ENCODE measurements at regions of chr20 and their contacts with region 1.

Region 1: DNA sequence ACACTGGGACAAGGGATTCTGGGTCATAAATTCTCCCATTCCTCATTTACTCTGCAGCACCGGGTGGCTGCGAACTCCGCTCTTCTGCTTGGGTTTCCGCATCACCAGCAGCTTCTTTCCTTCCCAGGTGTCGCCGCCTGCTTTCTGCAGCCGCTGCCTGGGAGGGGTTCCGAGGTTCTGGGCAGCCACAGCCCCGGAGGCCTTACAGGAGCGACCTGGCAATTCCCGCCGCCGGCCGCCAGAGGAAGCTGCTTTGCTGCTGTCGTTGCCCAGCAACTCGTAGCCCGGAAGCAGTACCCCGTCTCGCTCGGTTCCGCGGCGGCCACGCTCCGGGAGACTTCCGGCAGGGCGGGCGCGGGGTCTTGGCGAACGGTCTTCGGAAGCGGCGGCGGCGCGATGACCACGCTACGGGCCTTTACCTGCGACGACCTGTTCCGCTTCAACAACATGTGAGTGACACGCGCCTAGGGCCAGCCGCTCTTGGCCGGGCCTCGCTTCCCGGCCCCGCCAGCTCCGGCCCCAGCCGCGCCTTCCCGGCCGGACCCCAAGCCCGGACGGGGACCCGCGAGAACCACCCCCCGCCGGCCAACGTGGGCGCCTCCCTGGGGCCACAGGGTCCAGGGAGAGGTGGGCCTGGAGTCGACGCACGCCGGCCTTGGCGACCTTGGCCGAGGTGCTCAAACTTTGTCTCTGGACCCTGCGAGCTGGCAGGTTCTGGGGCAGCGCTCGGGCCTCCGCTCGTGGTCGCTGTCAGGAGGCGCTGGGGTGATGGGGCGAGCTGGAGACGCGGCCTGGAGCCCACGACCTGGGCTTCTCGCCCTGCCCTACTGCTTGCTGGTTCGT is at the start of gene NAA20:
- DNase-seq: peak; percentile 80 to 89 (median 87)
- ATAC-seq: peak; percentile 99
- H3K4me3 ChIP-seq: peak within 1 kb of the TSS; percentile 77
- H3K4me3 Mint-ChIP-seq: peak within 1 kb of the TSS; percentile 88 to 96 (median 93)
- H3K27ac ChIP-seq: peak within 1 kb of the TSS; percentile 83
- H3K27ac Mint-ChIP-seq: peak within 1 kb of the TSS; percentile 90 to 96 (median 94)
- H3K4me1 ChIP-seq: peaks cover 9 to 28% of the 10 kb centered on the region in 2 donors
- H3K4me1 Mint-ChIP-seq: peaks cover 38 to 68% (median 63%) of the 10 kb centered on the region in 7 donors
- H3K27me3 ChIP-seq: no peaks in the 10 kb centered on the region
- H3K27me3 Mint-ChIP-seq: no peaks in the 10 kb centered on the region
- total RNA-seq, gene NAA20: 21.5 to 52.6 (median 28.3) TPM

Region 2: DNA sequence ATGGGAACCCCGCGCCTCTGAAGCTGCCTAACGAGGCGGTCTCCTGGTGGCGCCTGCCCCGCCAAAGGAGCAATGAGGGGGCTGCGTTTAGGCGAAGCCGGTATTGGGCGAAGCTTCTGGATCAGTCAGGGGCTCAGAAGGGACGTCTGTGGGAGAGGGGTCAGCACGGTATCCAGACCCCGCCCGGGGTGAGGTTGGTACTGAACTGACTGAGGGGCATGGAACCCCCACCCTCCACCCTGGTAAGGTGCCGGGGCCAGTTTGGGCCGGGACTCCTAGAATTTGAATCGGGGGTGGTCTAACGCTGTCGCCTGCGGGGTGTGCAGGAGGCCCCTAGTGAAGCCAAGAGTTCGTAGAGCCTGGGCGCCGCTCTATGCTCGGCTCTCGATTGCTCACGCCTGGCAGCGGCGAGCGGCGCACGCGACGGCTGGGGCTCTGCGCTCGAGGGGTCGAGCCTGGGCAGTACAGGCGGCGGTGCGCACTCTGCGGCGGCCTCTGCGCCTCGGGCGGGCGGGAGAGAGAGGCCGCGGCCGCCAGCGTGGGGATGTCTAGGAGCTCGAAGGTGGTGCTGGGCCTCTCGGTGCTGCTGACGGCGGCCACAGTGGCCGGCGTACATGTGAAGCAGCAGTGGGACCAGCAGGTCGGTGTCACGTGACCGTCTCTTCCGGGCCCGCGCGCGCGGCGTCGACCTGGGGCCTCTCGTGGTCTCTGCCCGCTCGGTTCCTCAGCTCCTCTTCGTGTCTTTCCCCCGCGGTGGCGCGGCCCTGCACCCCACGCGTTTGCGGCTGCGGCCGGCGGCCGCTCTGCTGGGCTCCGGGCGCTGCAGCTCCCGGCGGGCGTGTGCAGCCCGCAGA is 1879.6 kb before region 1 on chr20 and contains the starts of genes KAT14 and PET117:
- CTCF ChIA-PET with region 1: no interaction called
- POLR2A ChIA-PET with region 1: no interaction called
- intact Hi-C with region 1: loop called in 1 of 2 experiments (anchors 5 kb)
- DNase-seq: peak; percentile 85 to 96 (median 93)
- ATAC-seq: peak; percentile 98
- H3K4me3 ChIP-seq: peak within 1 kb of the TSS; percentile 99
- H3K4me3 Mint-ChIP-seq: peak within 1 kb of the TSS; percentile 76 to 92 (median 88)
- H3K27ac ChIP-seq: peak within 1 kb of the TSS; percentile 89
- H3K27ac Mint-ChIP-seq: peak within 1 kb of the TSS; percentile 85 to 95 (median 92)
- H3K4me1 ChIP-seq: peaks cover 13 to 15% of the 10 kb centered on the region in 2 donors
- H3K4me1 Mint-ChIP-seq: peaks cover 23 to 44% (median 31%) of the 10 kb centered on the region in 7 donors
- H3K27me3 ChIP-seq: no peaks in the 10 kb centered on the region
- H3K27me3 Mint-ChIP-seq: peaks cover 0 to 7% (median 0%) of the 10 kb centered on the region in 5 donors
- total RNA-seq, gene KAT14: 12.3 to 26.7 (median 16.2) TPM
- total RNA-seq, gene PET117: 9.0 to 20.3 (median 11.7) TPM

Region 3: GRCh38 chr20:18587665-18588573 is 1429.3 kb before region 1 on chr20 and contains the start of gene DTD1:
- CTCF ChIA-PET with region 1: no interaction called
- POLR2A ChIA-PET with region 1: no interaction called
- intact Hi-C with region 1: loop called in 1 of 2 experiments (anchors 5 kb)
- DNase-seq: peak; percentile 29 to 93 (median 53)
- ATAC-seq: peak; percentile 92
- H3K4me3 ChIP-seq: peak within 1 kb of the TSS; percentile 68
- H3K4me3 Mint-ChIP-seq: peak within 1 kb of the TSS; percentile 83 to 99 (median 91)
- H3K27ac ChIP-seq: peak within 1 kb of the TSS; percentile 74
- H3K27ac Mint-ChIP-seq: peak within 1 kb of the TSS; percentile 80 to 94 (median 91)
- H3K4me1 ChIP-seq: peaks cover 0 to 4% of the 10 kb centered on the region in 2 donors
- H3K4me1 Mint-ChIP-seq: peaks cover 16 to 39% (median 27%) of the 10 kb centered on the region in 7 donors
- H3K27me3 ChIP-seq: no peaks in the 10 kb centered on the region
- H3K27me3 Mint-ChIP-seq: peaks cover 0 to 11% (median 9%) of the 10 kb centered on the region in 5 donors
- total RNA-seq, gene DTD1: 12.7 to 24.4 (median 16.6) TPM

Region 4: DNA sequence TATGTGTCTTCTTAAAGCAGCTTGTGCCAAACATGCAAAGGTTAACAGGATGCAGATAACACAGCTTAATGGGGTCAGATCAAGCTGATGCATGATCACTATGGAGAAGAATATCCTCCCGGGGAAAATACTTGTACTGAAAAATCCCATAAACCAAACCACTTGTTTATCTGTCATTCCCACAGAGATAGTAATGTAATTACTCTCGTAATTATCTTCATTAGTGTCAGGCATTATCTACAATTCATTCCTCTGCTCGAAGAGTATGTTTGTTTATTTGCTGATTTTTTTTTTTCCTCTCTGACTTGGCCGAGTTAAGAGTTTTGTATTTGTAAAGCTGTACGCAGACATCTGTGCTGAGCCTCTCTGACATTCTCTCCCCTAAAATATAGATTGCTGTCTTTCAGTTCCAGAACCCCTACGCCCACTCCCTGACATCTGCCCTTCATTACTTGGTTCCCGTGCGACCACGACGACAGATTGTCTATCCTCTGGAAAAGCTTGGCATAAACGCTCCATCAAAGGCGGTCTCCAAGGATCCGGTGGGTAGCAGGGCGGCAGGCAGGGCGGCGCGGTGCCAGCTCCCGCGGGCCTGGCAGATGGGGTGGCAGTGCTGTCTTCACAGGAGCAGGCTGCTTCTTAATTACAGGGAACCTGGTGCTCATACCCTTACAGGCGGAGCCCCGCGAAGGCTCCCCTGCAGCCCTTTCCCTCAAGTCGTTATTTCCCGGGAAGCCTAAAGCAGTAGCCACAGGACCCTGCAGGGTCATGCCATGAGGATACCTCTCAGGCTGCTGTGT is 182.3 kb after region 1 on chr20:
- CTCF ChIA-PET with region 1: no interaction called
- POLR2A ChIA-PET with region 1: no interaction called
- intact Hi-C with region 1: no loop called
- DNase-seq: no peak
- ATAC-seq: no peak
- H3K4me3 ChIP-seq: no peak overlapping the region
- H3K4me3 Mint-ChIP-seq: no peak overlapping the region
- H3K27ac ChIP-seq: no peak overlapping the region
- H3K27ac Mint-ChIP-seq: no peak overlapping the region
- H3K4me1 ChIP-seq: no peaks in the 10 kb centered on the region
- H3K4me1 Mint-ChIP-seq: no peaks in the 10 kb centered on the region
- H3K27me3 ChIP-seq: no peaks in the 10 kb centered on the region
- H3K27me3 Mint-ChIP-seq: peaks cover 6 to 37% (median 27%) of the 10 kb centered on the region in 5 donors

Region 5: DNA sequence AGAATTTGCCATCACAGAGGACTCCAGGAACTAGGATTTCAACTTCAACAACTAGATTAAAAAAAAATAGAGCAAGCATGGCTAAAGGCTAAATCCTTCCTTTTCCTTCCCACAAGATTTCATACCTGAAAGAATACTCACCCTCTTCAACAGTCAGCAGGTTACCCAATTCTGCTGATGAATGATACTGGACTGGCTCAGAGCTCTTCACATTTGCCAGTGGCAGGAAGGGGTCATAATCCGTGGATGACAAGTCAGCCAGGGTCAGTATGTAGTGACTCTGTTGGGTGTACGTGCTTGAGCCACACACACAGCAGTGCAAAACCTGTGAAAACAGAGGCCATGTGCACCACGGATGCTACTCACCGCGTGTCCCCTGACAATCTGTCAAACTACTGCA is 503.6 kb after region 1 on chr20:
- CTCF ChIA-PET with region 1: no interaction called
- POLR2A ChIA-PET with region 1: no interaction called
- intact Hi-C with region 1: no loop called
- DNase-seq: no peak
- ATAC-seq: no peak
- H3K4me3 ChIP-seq: no peak overlapping the region
- H3K4me3 Mint-ChIP-seq: no peak overlapping the region
- H3K27ac ChIP-seq: no peak overlapping the region
- H3K27ac Mint-ChIP-seq: no peak overlapping the region
- H3K4me1 ChIP-seq: no peaks in the 10 kb centered on the region
- H3K4me1 Mint-ChIP-seq: peaks cover 0 to 5% (median 0%) of the 10 kb centered on the region in 7 donors
- H3K27me3 ChIP-seq: no peaks in the 10 kb centered on the region
- H3K27me3 Mint-ChIP-seq: no peaks in the 10 kb centered on the region

Measured in naive thymus-derived CD4-positive, alpha-beta T cell (primary cell).